Activated naive CD4-positive, alpha-beta T cell treated with anti-CD3 and anti-CD28 coated beads for 36 hours (primary cell): ENCODE measurements at regions of chr10 and their contacts with region 1.

Region 1: GRCh38 chr10:63707254-63707910 is 186.2 kb downstream of the REEP3 start:
- DNase-seq: peak; percentile 58
- H3K4me3 Mint-ChIP-seq: no peak overlapping the region
- H3K27ac Mint-ChIP-seq: peak overlapping the region; percentile 27
- H3K4me1 Mint-ChIP-seq: peaks cover 17% of the 10 kb centered on the region
- H3K27me3 Mint-ChIP-seq: no peaks in the 10 kb centered on the region

Region 2: GRCh38 chr10:62426086-62426485 is 1281.3 kb before region 1 on chr10:
- CTCF ChIA-PET with region 1: no interaction called
- intact Hi-C with region 1: loop called (anchors 5 kb)
- DNase-seq: peak; percentile 64
- H3K4me3 Mint-ChIP-seq: no peak overlapping the region
- H3K27ac Mint-ChIP-seq: peak overlapping the region; percentile 12
- H3K4me1 Mint-ChIP-seq: peaks cover 28% of the 10 kb centered on the region
- H3K27me3 Mint-ChIP-seq: no peaks in the 10 kb centered on the region

Region 3: GRCh38 chr10:62545160-62546066 is 1162.0 kb before region 1 on chr10:
- CTCF ChIA-PET with region 1: no interaction called
- intact Hi-C with region 1: no loop called
- DNase-seq: no peak
- H3K4me3 Mint-ChIP-seq: no peak overlapping the region
- H3K27ac Mint-ChIP-seq: no peak overlapping the region
- H3K4me1 Mint-ChIP-seq: no peaks in the 10 kb centered on the region
- H3K27me3 Mint-ChIP-seq: no peaks in the 10 kb centered on the region

Region 4: DNA sequence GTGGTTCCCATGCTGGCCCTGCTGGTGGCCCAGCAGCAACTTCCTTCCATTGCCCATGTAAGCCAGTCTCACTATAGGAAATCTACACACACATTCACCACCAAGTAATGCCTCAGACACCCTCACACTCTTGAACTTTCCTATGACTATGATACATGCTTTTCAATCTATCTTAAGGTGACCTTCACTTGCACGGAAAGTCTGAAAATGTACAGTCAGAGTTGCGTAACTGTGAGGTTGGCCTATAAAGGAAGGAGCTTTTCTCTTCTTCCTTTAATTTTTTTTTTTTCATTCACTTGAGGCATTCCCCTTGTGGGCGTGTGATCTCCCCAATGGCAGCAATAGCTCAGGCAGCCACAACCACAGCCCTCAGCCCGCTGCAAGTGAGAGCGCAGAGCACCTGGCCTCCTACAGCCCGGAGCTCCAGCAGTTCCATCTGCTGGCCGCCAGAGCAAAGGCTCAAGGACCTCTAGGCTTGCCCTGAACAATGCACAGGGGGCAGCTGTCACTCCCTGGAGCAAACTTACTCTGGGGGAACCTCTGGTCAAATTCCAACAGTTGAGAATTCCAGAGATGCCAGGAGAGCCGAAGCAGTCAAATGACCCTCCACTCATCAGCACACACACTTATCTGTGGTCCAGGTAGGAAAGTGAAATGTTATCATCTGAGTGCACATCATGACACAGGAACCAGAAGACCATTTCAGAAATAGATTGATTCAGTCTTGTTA is 1026.0 kb before region 1 on chr10:
- CTCF ChIA-PET with region 1: no interaction called
- intact Hi-C with region 1: loop called (anchors 5 kb)
- DNase-seq: peak; percentile 93
- H3K4me3 Mint-ChIP-seq: no peak overlapping the region
- H3K27ac Mint-ChIP-seq: peak overlapping the region; percentile 72
- H3K4me1 Mint-ChIP-seq: peaks cover 33% of the 10 kb centered on the region
- H3K27me3 Mint-ChIP-seq: no peaks in the 10 kb centered on the region

Region 5: GRCh38 chr10:62992145-62992721 is 715.1 kb before region 1 on chr10:
- CTCF ChIA-PET with region 1: no interaction called
- intact Hi-C with region 1: loop called (anchors 1 kb)
- DNase-seq: peak; percentile 24
- H3K4me3 Mint-ChIP-seq: peak overlapping the region; percentile 1
- H3K27ac Mint-ChIP-seq: peak overlapping the region; percentile 71
- H3K4me1 Mint-ChIP-seq: peaks cover 43% of the 10 kb centered on the region
- H3K27me3 Mint-ChIP-seq: peaks cover 3% of the 10 kb centered on the region

Region 6: GRCh38 chr10:63227207-63227915 is 480.0 kb before region 1 on chr10:
- CTCF ChIA-PET with region 1: no interaction called
- intact Hi-C with region 1: loop called (anchors 1 kb)
- DNase-seq: no peak
- H3K4me3 Mint-ChIP-seq: no peak overlapping the region
- H3K27ac Mint-ChIP-seq: peak overlapping the region; percentile 97
- H3K4me1 Mint-ChIP-seq: peaks cover 56% of the 10 kb centered on the region
- H3K27me3 Mint-ChIP-seq: no peaks in the 10 kb centered on the region

Region 7: DNA sequence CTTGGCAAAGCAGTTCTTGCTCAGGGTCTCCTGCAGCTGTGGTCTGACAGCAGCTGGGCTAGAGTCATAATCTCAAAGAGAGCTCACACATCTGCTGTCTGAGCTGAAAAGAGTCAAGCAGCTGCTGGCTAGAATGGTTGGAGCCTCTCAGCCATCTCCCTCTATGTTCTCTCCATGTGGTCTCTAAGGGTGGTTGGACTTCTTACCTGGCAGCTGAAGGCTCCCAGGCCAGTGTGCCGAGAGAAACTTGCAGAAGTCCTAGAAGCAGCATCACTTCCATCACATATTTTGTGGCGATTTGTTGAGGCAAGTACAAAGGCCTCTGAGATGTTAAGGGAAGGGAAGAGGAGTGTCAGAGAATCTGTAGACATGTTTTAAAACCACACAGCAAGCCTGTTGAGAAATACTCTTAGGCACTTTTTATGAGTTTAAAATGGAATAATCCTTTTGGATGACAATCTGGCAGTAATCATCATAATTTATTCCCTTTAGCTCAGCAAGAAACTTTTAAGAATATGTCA is 93.0 kb before region 1 on chr10:
- CTCF ChIA-PET with region 1: no interaction called
- intact Hi-C with region 1: loop called (anchors 1 kb)
- DNase-seq: no peak
- H3K4me3 Mint-ChIP-seq: no peak overlapping the region
- H3K27ac Mint-ChIP-seq: no peak overlapping the region
- H3K4me1 Mint-ChIP-seq: peaks cover 14% of the 10 kb centered on the region
- H3K27me3 Mint-ChIP-seq: no peaks in the 10 kb centered on the region

Region 8: DNA sequence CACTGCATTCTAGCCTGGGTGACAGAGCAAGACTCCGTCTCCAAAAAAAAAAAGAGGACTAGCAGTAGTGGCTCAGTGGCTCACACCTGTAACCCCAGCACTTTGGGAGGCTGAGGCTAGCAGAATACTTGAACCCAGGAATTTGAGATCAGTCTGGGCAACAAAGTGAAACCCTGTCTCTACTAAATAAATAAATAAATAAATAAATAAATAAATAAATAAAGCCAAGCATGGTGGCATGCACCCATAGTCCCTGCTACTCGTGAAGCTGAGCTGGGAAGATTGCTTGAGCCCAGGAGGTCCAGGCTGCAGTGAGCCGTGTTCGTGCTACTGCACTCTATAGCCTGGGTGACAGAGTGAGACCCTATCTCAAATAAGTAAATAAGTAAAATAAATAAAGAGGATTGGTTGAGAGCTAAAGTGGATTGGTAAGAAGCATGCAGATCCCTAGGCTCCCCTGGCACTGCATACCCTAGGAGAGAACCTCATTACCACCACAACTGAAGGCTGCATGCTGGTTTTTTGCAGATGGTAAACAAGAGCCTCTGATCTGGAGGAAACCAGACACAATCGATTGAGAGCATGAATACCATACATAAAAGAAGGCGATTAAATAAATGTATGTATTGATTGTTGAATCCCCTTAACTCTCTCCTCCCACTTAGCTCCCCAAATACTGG is 23.0 kb before region 1 on chr10:
- CTCF ChIA-PET with region 1: no interaction called
- intact Hi-C with region 1: no loop called
- DNase-seq: no peak
- H3K4me3 Mint-ChIP-seq: no peak overlapping the region
- H3K27ac Mint-ChIP-seq: no peak overlapping the region
- H3K4me1 Mint-ChIP-seq: no peaks in the 10 kb centered on the region
- H3K27me3 Mint-ChIP-seq: no peaks in the 10 kb centered on the region